Psoas muscle (tissue), 8 donors: ENCODE measurements at regions of chr16 and their contacts with region 1.

Region 1: DNA sequence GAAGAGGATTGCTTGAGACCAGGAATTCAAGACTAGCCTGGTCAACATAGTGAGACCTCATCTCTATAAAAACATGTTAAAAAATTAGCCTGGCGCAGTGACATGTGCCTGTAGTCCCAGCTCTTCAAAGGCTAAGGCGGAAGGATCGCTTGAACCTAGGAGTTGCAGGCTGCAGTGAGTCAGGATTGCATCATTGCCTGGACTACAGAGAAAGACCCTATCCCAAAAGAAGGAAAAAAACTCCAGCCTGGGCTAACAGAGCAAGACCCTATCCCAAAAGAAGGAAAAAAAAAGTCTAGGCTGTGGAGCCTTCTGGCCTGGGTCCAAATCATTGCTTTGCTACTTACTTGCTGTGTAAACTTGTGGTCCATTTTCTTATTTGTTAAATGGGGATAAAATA is 4.9 kb downstream of the CCP110 start:
- DNase-seq: no peak
- ATAC-seq: no peak
- H3K4me3 ChIP-seq: no peak overlapping the region
- H3K27ac ChIP-seq: no peak overlapping the region
- H3K4me1 ChIP-seq: peaks cover 11% of the 10 kb centered on the region
- H3K27me3 ChIP-seq: no peaks in the 10 kb centered on the region
- CTCF ChIP-seq: no peak

Region 2: DNA sequence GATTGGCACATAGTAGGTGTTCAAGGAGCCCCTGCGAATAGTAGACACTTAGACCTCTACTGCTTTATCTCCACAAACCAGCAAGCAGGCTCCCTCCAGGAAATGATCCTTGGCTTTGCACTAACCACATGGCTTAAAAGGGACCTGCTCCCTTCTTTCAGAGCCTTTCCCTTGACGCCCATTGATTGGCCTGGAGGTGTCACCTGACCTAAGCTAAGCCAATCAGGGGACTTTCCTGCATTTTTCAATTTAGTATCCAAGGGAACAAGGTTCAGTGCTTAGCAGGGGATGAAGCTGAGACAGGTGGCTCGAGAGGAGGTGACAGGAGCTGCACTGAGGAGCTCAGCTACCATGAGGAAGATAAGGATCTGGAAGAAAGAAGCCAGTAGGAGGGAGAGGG is 190.3 kb before region 1 on chr16:
- intact Hi-C with region 1: no loop called
- DNase-seq: no peak
- ATAC-seq: no peak
- H3K4me3 ChIP-seq: no peak overlapping the region
- H3K27ac ChIP-seq: no peak overlapping the region
- H3K4me1 ChIP-seq: no peaks in the 10 kb centered on the region
- H3K27me3 ChIP-seq: peaks cover 0 to 2% (median 0%) of the 10 kb centered on the region in 3 donors
- CTCF ChIP-seq: no peak

Region 3: GRCh38 chr16:19502395-19503131 is 26.1 kb before region 1 on chr16:
- intact Hi-C with region 1: no loop called
- DNase-seq: peak; percentile 54 to 58
- ATAC-seq: peak; percentile 39 to 78 (median 60)
- H3K4me3 ChIP-seq: no peak overlapping the region
- H3K27ac ChIP-seq: no peak overlapping the region
- H3K4me1 ChIP-seq: no peaks in the 10 kb centered on the region
- H3K27me3 ChIP-seq: no peaks in the 10 kb centered on the region
- CTCF ChIP-seq: peak; percentile 71

Region 4: DNA sequence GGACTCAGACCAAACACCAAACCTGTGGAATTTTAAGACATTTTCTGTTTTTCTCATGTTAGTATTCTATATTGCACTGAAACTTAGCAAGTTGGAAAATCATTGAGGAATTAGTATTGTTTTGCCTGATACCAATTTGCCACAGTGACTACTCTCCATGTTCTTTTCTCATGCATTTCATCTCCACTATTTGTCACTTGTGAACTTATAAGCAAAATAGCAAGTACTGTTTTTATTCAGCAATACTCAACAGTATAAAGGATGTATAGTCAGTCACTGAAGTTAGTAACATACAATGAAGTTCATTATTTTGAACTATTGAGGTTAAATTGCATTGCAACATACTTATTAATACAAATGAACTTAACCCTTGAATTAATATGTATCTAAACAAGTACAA is 21.0 kb after region 1 on chr16:
- intact Hi-C with region 1: loop called in 1 of 2 experiments (anchors 2 kb)
- DNase-seq: no peak
- ATAC-seq: no peak
- H3K4me3 ChIP-seq: no peak overlapping the region
- H3K27ac ChIP-seq: no peak overlapping the region
- H3K4me1 ChIP-seq: no peaks in the 10 kb centered on the region
- H3K27me3 ChIP-seq: no peaks in the 10 kb centered on the region
- CTCF ChIP-seq: no peak

Region 5: DNA sequence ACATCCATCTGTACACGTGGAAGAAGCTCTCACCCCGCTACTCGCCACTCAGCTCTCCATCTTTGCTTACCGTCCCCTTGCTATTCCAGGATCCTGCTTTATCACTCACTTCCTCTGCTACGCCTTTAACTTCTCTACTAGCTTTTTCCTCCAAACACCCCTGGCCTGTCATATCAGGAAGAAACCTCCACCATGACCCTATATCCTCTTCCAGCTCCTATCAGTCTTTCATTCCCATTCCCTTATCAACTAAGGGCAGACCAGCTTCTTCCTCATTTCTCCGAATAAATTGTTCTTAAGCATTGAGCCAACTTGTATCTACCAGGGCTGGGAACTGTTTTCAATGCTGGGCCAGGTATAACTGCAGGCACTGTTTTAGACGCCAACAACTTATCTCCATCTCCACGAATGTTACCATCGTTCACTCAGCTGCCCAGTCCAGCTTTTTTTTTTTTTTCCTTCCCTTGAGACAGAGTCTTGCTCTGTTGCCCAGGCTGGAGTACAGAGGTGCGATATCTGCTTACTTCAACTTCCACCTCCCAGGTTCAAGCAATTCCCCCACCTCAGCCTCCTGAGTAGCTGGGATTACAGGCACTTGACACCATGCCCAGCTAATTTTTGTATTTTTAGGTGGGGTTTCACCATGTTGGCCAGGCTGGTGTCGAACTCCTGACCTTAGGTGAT is 193.7 kb after region 1 on chr16:
- intact Hi-C with region 1: no loop called
- DNase-seq: no peak
- ATAC-seq: no peak
- H3K4me3 ChIP-seq: no peak overlapping the region
- H3K27ac ChIP-seq: no peak overlapping the region
- H3K4me1 ChIP-seq: peaks cover under 1% of the 10 kb centered on the region
- H3K27me3 ChIP-seq: no peaks in the 10 kb centered on the region
- CTCF ChIP-seq: no peak